ENCODE measurements at regions of chr1 and their contacts with region 1.

Region 1: DNA sequence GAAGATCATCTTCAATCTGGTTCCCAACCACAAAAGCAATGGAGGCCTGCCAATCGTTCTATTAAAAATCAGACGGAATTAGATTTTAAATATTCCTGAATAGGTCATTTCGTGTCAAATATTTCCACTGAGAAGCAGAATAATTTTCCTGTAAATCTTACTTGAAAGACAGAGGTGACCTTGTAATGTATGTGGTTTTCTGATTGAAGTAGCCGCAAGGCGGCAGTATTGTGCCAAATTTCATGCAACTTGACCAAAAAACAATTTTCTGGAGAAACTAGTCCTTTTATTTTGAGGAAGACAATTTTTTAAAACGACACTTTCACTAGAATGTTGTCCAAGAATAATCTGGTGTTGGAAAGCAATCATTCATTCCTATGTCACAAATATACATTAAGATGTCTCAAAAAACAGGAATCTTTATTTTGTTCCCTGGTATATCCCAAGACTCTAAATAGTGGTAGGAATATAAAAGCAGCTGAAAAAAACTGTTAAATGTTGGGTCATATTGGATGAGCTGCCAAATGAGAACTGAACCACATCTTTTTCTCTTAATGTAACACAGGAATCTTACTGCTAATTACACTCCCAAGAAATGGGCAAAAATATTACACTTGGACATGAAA is 33.6 kb downstream of the SPAG17 start:
- DNase-seq: peak; percentile 29
- H3K4me3 ChIP-seq: no peak overlapping the region
- H3K27ac ChIP-seq: no peak overlapping the region
- H3K4me1 ChIP-seq: peaks cover 6% of the 10 kb centered on the region
- H3K27me3 ChIP-seq: no peaks in the 10 kb centered on the region
- CTCF ChIP-seq: peak; percentile 70 to 76

Region 2: DNA sequence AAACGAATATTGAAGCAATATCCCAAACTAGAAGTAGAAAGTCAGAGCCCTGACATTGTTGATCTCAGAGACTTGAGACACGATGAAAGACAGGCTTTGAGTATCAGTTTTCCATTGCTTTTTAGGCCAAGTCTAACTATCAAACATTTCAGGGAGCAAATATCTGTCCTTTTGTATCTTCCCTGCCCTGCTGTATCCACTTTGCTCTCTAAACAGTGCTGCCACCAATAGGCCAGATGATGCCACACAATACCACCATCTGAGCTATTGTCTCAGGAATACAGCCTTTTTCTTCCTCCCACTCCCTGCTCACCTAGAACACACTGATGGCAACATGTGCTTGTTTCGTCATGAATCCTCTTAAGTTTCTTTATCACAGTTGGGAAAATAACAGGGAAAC is 96.2 kb after region 1 on chr1:
- CTCF ChIA-PET with region 1: no interaction called
- dilution Hi-C with region 1: loop called (anchors 5 kb)
- in situ Hi-C with region 1: no loop called
- intact Hi-C with region 1: loop called (anchors 1 kb)
- DNase-seq: peak; percentile 23
- H3K4me3 ChIP-seq: no peak overlapping the region
- H3K27ac ChIP-seq: no peak overlapping the region
- H3K4me1 ChIP-seq: no peaks in the 10 kb centered on the region
- H3K27me3 ChIP-seq: no peaks in the 10 kb centered on the region
- CTCF ChIP-seq: peak; percentile 50 to 79

Region 3: DNA sequence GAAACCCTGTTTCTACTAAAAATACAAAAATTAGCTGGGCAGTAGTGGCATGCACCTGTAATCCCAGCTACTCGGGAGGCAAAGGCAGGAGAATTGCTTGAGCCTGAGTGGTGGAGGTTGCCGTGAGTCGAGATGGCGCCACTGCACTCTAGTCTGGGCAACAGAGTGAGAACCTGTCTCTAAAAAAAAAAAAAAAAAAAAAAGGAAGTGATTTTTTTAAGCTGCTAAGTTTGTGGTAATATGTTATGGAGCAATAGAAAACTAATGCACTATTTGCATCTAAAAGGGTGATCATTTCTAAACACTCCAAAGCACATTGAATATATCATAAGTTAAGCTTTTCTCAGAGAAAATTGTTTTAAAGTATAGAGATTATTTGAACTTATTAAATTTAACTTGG is 278.4 kb after region 1 on chr1:
- CTCF ChIA-PET with region 1: no interaction called
- dilution Hi-C with region 1: no loop called
- in situ Hi-C with region 1: no loop called
- intact Hi-C with region 1: loop called (anchors 10 kb)
- DNase-seq: no peak
- H3K4me3 ChIP-seq: no peak overlapping the region
- H3K27ac ChIP-seq: no peak overlapping the region
- H3K4me1 ChIP-seq: no peaks in the 10 kb centered on the region
- H3K27me3 ChIP-seq: peaks cover 3% of the 10 kb centered on the region
- CTCF ChIP-seq: no peak

Region 4: DNA sequence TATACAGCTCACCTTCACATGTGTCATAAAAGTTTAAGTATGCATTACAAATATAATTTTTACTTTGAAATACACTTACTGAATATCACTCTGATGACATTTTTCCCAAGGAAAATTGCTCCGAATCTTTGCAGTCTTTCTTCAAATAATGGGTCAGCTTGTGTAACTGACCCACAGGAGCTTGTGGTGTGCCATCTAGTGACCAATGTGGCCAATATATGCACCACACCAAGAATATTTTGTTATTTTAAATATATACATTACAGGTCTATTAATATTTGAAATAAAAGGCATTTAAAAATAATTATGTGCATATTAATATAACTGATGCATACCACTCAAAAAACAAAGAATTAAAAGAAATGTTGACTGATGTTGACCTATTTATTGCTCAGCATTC is 565.4 kb after region 1 on chr1:
- CTCF ChIA-PET with region 1: no interaction called
- dilution Hi-C with region 1: no loop called
- in situ Hi-C with region 1: no loop called
- intact Hi-C with region 1: loop called (anchors 2 kb)
- DNase-seq: no peak
- H3K4me3 ChIP-seq: no peak overlapping the region
- H3K27ac ChIP-seq: no peak overlapping the region
- H3K4me1 ChIP-seq: no peaks in the 10 kb centered on the region
- H3K27me3 ChIP-seq: no peaks in the 10 kb centered on the region
- CTCF ChIP-seq: peak in 1 of 2 donors; percentile 42

Region 5: DNA sequence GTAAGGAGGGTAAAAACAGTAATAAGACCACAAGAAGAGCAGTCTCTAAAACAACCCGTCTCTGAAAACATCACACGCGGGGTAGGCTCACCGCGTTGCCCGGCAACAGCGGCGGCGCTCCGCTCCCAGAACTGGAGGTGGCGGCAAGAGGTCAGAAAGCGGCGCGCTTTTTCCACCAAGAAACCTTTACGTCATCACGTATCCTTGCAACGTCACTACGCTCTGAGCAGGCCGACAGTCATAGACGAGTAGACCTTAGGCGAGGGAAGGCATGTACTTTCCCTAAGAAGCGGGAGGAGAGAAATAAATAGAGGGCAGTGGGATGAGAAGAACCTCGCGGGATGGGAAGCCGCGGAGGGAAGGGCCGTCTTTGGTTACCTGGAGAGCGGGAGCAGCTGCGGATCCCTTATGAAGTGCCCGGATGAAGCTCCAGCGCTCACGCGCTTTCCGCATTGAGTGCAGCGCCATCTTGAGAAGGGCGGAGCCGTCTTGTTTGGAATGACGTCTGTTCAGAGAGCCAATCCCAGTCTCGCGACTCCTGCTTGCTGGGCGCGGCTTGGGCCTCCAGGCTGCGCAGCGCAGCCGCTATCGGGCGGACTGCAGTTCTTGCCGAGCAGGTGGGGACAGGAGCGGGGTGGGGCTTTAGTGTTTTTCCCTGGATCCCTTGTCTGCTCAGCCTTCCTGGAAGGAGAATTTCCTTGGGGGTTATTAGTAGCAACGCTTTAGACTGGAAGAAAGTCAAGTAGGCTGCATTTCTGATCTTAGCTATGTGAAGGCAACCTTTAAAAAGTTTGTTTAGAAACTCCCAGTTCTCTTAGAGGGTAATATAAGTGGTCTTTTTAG is 989.0 kb after region 1 on chr1 and contains the start of gene WARS2:
- CTCF ChIA-PET with region 1: no interaction called
- dilution Hi-C with region 1: no loop called
- in situ Hi-C with region 1: no loop called
- intact Hi-C with region 1: loop called (anchors 10 kb)
- DNase-seq: peak; percentile 96
- H3K4me3 ChIP-seq: peak within 1 kb of the TSS; percentile 52 to 73 (median 65)
- H3K27ac ChIP-seq: peak within 1 kb of the TSS; percentile 98
- H3K4me1 ChIP-seq: peaks cover 23% of the 10 kb centered on the region
- H3K27me3 ChIP-seq: no peaks in the 10 kb centered on the region
- CTCF ChIP-seq: no peak
- total RNA-seq, gene WARS2: 12.1 to 16.5 TPM

Region 6: DNA sequence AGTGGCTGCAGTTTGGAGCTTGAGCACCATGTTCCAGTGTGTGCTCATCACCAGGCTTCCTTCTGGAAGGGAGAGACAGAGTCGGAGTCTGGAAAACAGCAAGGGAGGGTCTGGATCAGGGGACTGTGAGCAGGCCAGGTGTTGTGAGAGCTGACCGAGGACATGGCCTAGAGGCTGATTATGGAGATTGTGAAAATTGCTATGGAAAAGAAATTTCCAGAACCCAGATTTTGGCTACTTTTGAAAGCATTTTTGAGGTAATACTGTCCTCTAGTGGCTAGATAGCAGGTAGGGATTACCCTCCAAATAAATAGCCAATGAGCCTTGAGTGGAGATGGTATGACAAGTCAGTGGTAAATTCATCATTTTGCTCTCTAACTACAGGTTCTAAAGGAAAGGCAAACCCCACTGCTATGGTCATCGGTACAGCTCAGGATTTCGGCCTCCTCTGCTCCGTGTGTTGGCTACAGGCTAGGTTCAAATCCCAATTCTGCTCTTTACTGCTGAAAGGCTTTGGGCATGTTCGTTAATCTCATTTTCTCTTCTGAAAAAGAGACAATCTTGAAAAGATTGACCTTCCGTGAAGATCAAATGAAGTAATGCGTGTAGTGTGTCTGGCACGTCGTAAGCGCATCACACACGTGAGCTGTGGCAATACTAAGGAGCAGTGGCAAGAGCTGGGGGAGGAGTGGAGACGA is 1216.2 kb after region 1 on chr1:
- CTCF ChIA-PET with region 1: no interaction called
- dilution Hi-C with region 1: no loop called
- in situ Hi-C with region 1: loop called in 1 of 2 experiments (anchors 10 kb)
- intact Hi-C with region 1: loop called (anchors 1 kb)
- DNase-seq: peak; percentile 57
- H3K4me3 ChIP-seq: no peak overlapping the region
- H3K27ac ChIP-seq: no peak overlapping the region
- H3K4me1 ChIP-seq: peaks cover 12% of the 10 kb centered on the region
- H3K27me3 ChIP-seq: no peaks in the 10 kb centered on the region
- CTCF ChIP-seq: peak; percentile 97 to 99